HCT116 (cell line): ENCODE measurements at regions of chr3 and their contacts with region 1.

Region 1: DNA sequence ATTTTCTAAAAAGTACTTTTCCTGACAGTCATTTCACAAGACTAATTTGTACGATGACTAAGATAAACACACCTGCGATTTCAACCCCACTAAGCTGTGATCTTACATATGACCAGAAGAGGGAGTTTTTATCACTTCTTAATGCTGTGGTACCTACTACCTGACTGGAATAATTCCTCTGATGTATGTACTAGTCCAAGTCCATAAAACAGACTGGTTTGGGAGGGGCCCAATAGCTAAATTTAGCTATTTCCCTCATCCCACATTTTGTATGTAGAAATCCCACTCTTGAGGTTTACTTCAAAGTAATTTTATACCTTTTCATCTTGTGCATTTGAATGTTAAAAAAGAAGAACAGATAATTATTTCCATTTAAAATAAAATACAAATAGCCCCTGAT is 49.7 kb upstream of the SCAANT1 start:
- DNase-seq: peak; percentile 39
- ATAC-seq: peak; percentile 84
- H3K4me3 ChIP-seq: no peak overlapping the region
- H3K27ac ChIP-seq: no peak overlapping the region
- H3K4me1 ChIP-seq: peaks cover 0 to 12% of the 10 kb centered on the region in 2 experiments; a peak in 3 of 4 replicates
- H3K27me3 ChIP-seq: no peaks in the 10 kb centered on the region
- CTCF ChIP-seq: peak; percentile 35 to 55 (median 51); a peak in 5 of 6 replicates
- POLR2A ChIP-seq: no peak
- RAD21 ChIP-seq: peak; percentile 44

Region 2: DNA sequence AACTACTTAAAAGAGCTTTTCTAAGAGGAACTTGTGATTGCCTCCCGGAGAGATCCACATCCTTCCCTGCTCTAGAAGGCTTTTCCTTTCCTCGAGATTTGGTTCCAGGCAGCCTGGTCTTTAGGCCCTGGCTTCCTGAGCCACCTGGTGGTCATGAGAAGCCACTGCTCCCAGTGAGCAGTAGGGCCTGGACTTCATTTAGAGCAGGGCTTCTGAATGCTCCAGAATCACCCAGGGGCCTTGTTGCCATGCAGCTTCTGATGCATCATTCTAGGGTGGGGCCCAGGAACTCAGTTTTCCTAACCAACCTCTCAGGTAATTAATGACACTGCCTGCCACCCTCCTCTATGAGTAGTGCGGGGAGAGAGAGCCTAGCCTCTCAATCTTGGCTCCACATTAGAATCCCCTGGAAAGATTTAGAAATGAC is 31.8 kb after region 1 on chr3:
- CTCF ChIA-PET with region 1: no interaction called
- POLR2A ChIA-PET with region 1: no interaction called
- RAD21 ChIA-PET with region 1: no interaction called
- intact Hi-C with region 1: loop called (anchors 1 kb)
- DNase-seq: peak; percentile 27
- ATAC-seq: peak; percentile 98
- H3K4me3 ChIP-seq: no peak overlapping the region
- H3K27ac ChIP-seq: no peak overlapping the region
- H3K4me1 ChIP-seq: no peaks in the 10 kb centered on the region
- H3K27me3 ChIP-seq: no peaks in the 10 kb centered on the region
- CTCF ChIP-seq: peak; percentile 56 to 93 (median 84)
- POLR2A ChIP-seq: no peak
- RAD21 ChIP-seq: peak; percentile 71